Posterior vena cava (tissue), 2 donors: ENCODE measurements at regions of chr7 and their contacts with region 1.

Region 1: GRCh38 chr7:99539213-99539811 is 12.6 kb downstream of the FAM200A start:
- DNase-seq: no peak

Region 2: GRCh38 chr7:99438573-99439480 is 100.5 kb before region 1 on chr7 and contains the starts of genes CPSF4 and PTCD1:
- intact Hi-C with region 1: no loop called
- DNase-seq: peak; percentile 99
- total RNA-seq, gene CPSF4: 22.9 to 25.7 TPM
- total RNA-seq, gene PTCD1: 3.1 to 5.6 TPM

Region 3: DNA sequence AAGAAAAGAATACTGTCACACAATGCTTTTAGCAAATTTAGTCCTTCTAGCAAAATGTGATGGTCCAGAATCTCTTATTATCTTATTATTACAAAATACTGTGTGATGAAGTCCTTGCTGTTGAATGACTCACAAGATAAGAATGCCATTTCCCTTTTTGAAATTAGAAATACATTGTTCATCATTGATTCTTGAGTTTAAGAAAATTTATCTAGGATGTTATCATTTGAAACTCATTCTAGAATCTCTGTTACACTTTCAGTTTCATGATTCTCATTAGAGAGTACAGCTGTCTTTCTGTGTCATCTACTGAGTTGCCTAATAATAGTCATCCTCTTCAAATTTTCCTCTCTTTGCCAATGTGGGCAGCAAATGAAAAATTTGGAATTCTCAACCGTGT is 25.3 kb before region 1 on chr7:
- intact Hi-C with region 1: loop called in 1 of 2 experiments (anchors 1 kb)
- DNase-seq: no peak

Region 4: GRCh38 chr7:99806839-99807478 is 267.6 kb after region 1 on chr7:
- intact Hi-C with region 1: no loop called
- DNase-seq: no peak

Region 5: GRCh38 chr7:100034871-100035510 is 495.7 kb after region 1 on chr7:
- intact Hi-C with region 1: no loop called
- DNase-seq: no peak

Region 6: GRCh38 chr7:100102950-100103840 is 563.9 kb after region 1 on chr7:
- intact Hi-C with region 1: no loop called
- DNase-seq: no peak